Right cardiac atrium (tissue), 5 donors: ENCODE measurements at regions of chr1 and their contacts with region 1.

Region 1: GRCh38 chr1:180252638-180253536 is 22.8 kb downstream of the LHX4 start:
- DNase-seq: peak; percentile 69 to 89 (median 88)
- ATAC-seq: peak; percentile 36 to 57
- H3K4me3 ChIP-seq: no peak overlapping the region
- H3K27ac ChIP-seq: no peak overlapping the region
- H3K4me1 ChIP-seq: no peaks in the 10 kb centered on the region
- H3K27me3 ChIP-seq: no peaks in the 10 kb centered on the region

Region 2: GRCh38 chr1:180415985-180416633 is 163.2 kb after region 1 on chr1:
- intact Hi-C with region 1: loop called in 3 of 4 experiments (anchors 5 kb)
- DNase-seq: no peak
- ATAC-seq: no peak
- H3K4me3 ChIP-seq: no peak overlapping the region
- H3K27ac ChIP-seq: no peak overlapping the region
- H3K4me1 ChIP-seq: no peaks in the 10 kb centered on the region
- H3K27me3 ChIP-seq: no peaks in the 10 kb centered on the region

Region 3: GRCh38 chr1:180470031-180470430 is 217.1 kb after region 1 on chr1:
- intact Hi-C with region 1: loop called in 1 of 4 experiments (anchors 10 kb)
- DNase-seq: no peak
- ATAC-seq: no peak
- H3K4me3 ChIP-seq: no peak overlapping the region
- H3K27ac ChIP-seq: no peak overlapping the region
- H3K4me1 ChIP-seq: no peaks in the 10 kb centered on the region
- H3K27me3 ChIP-seq: no peaks in the 10 kb centered on the region

Region 4: DNA sequence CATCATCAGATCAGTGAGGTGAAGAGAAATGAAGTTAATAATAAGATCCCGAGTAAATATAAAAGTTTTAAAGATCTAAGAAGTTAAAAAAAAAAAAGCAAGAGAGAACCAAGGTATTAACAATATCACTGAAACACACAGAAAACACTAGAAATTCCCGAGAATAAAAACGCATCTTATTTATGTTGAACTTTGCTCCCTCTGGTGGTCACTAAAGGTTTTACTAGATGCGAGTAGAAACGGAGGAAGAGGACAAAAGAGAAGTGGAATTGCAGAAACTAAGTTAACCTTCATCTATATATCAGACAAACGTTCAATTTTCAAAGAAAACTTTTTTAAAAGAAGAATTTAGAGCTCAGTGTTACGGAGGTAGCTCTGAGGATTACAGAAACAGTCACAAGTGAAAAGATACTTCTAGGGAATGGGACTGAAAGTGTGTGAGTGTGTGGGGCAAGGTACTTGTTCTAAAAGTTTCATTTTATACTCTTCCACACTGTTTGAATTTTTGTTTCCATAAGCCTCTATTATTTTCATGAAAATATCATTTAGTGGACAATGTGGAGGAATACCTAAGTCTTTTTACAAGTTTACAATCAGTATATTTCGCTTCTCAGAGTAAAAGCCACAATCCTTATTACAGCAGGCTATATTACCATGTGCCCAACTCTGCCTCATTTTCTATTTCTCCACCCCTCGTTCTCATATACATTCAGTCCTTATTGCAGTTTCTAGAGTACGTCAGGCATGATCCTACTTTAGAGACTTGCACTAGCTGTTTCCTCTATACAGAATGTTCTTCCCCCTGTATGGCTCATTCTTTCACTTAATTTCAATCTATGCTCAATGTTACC is 229.8 kb after region 1 on chr1:
- intact Hi-C with region 1: loop called (anchors 5 to 10 kb)
- DNase-seq: no peak
- ATAC-seq: no peak
- H3K4me3 ChIP-seq: peak overlapping the region; percentile 13
- H3K27ac ChIP-seq: no peak overlapping the region
- H3K4me1 ChIP-seq: no peaks in the 10 kb centered on the region
- H3K27me3 ChIP-seq: no peaks in the 10 kb centered on the region